ENCODE measurements at regions of chr17 and their contacts with region 1.

Region 1: DNA sequence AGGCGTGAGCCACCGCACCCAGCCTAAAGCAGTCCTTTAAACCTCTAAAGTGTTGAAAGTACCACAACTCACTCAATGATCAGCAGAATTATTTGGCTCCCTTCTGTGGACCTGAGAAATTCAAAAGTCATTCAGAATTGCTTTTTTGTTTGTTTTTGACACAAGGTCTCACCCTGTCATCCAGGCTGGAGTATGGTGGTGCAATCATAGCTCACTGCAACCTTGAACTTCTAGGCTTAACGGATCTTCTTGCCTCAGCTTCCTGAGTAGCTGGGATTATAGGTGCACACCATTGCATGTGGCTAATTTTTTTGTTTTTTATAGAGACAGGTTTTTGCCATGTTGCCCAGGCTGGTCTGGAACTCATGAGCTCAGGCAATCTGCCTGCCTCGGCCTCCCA is 44.3 kb downstream of the TRAF4 start:
- DNase-seq: no peak

Region 2: DNA sequence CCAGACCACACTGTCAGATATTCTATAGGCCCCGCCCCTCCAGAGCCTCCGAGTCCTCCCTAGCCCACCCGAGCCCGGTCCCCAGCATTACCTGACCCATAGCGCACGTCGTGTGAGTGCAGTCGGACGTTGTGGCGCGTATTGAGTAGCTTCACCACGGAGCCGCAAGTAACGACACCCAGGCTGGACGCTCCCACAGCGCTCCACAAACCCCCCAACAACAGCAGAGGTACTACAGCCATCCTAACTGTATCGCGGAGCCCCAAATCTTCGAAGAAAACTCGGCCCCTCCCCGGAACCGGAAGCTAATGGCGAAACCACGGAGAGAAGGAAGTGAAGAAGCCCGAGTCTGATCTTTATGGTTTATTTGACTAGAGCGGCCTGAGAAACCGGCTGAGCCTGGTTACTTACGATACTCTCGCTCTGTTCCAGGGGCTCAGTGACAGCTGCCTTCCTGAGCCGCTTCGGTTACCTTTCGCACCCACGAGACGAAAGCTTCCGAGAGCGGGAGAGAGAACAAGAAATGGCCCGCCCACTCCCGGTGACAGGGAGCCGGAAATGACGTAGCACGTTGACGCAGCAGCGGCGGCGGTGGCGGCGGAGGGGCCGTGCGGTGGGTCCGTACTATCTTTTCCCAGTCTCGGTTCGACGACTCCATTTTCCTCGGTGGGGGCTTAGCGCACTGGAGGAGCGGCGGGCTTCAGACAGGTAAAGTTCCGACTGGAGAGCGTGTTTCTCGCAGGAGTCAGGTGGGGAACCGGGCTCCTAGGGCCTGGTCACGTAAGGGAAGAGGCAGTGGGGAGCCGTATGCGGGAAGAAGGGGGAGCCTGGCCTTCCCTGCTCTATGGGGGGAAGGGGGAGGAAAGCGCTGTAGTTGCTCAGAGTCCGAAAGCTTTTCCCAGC is 126.2 kb before region 1 on chr17 and contains the starts of genes SDF2 and SUPT6H:
- in situ Hi-C with region 1: no loop called
- DNase-seq: peak; percentile 91
- total RNA-seq, gene SDF2: 70.4 and 79.9 TPM in 2 replicates
- total RNA-seq, gene SUPT6H: 12.6 and 16.8 TPM in 2 replicates

Region 3: DNA sequence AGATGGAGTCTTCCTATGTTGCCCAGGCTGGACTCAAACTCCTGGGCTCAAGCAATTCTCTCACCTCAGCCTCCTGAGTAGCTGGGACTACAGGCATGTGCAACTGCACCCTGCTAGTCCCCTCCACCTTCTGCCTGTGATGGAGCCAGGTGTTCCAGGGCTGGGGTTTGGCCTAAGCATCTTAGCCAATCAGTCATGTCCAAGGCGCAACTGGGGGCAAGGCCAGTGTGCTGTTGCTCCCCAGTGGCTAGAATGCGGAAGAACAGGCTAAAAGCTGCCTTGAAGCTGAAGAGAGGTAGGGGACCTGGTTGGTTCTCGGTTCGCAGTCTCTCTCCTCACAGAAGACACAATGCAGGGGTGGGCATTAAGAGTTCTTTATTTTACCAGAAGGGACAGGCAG is 90.9 kb after region 1 on chr17:
- in situ Hi-C with region 1: loop called (anchors 5 kb)
- DNase-seq: peak; percentile 57

Measured in Caki2 (cell line).